IMR-90 (cell line): ENCODE measurements at regions of chr14 and their contacts with region 1.

Region 1: GRCh38 chr14:86057018-86057667 is 527.2 kb downstream of the FLRT2 start:
- DNase-seq: peak; percentile 39
- ATAC-seq: peak; percentile 51; the same call in 1 of the 2 replicates
- H3K4me3 ChIP-seq: no peak overlapping the region
- H3K27ac ChIP-seq: no peak overlapping the region
- H3K4me1 ChIP-seq: no peaks in the 10 kb centered on the region
- H3K27me3 ChIP-seq: no peaks in the 10 kb centered on the region
- CTCF ChIP-seq: peak; percentile 86
- POLR2A ChIP-seq: no peak
- RAD21 ChIP-seq: peak; percentile 86

Region 2: DNA sequence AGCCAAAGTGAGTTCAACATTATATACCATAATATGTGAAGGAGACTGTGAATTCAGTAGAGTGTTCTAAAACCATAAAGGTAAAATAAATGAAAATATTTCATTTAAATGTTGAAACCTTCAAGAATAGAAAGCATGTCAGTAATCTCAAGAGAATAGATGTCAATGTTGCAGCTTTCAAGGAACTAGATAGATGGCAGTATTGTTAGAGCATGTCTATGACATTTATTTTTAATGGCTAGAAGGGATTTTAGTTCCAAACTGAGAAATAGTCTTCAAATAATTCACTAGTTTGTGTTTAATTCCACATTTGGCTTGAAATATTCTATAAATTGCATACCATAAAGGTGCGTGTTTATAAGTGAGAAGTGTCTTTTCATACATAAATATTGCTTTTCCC is 200.7 kb before region 1 on chr14:
- CTCF ChIA-PET with region 1: no interaction called
- POLR2A ChIA-PET with region 1: no interaction called
- dilution Hi-C with region 1: no loop called
- in situ Hi-C with region 1: no loop called
- intact Hi-C with region 1: loop called (anchors 10 kb)
- DNase-seq: no peak
- ATAC-seq: no peak
- H3K4me3 ChIP-seq: no peak overlapping the region
- H3K27ac ChIP-seq: no peak overlapping the region
- H3K4me1 ChIP-seq: no peaks in the 10 kb centered on the region
- H3K27me3 ChIP-seq: no peaks in the 10 kb centered on the region
- CTCF ChIP-seq: peak; percentile 24; the same call in 1 of the 2 replicates
- POLR2A ChIP-seq: no peak
- RAD21 ChIP-seq: no peak

Region 3: GRCh38 chr14:86613126-86613525 is 556.0 kb after region 1 on chr14:
- CTCF ChIA-PET with region 1: no interaction called
- POLR2A ChIA-PET with region 1: interaction called, 17 read pairs
- dilution Hi-C with region 1: no loop called
- in situ Hi-C with region 1: no loop called
- intact Hi-C with region 1: no loop called
- DNase-seq: no peak
- ATAC-seq: no peak
- H3K4me3 ChIP-seq: no peak overlapping the region
- H3K27ac ChIP-seq: no peak overlapping the region
- H3K4me1 ChIP-seq: no peaks in the 10 kb centered on the region
- H3K27me3 ChIP-seq: no peaks in the 10 kb centered on the region
- CTCF ChIP-seq: no peak
- POLR2A ChIP-seq: no peak
- RAD21 ChIP-seq: no peak

Region 4: GRCh38 chr14:86902176-86902950 is 845.2 kb after region 1 on chr14:
- CTCF ChIA-PET with region 1: no interaction called
- POLR2A ChIA-PET with region 1: no interaction called
- dilution Hi-C with region 1: no loop called
- in situ Hi-C with region 1: no loop called
- intact Hi-C with region 1: loop called (anchors 2 kb)
- DNase-seq: no peak
- ATAC-seq: no peak
- H3K4me3 ChIP-seq: no peak overlapping the region
- H3K27ac ChIP-seq: no peak overlapping the region
- H3K4me1 ChIP-seq: no peaks in the 10 kb centered on the region; the same call in 1 of the 2 replicates
- H3K27me3 ChIP-seq: no peaks in the 10 kb centered on the region
- CTCF ChIP-seq: no peak
- POLR2A ChIP-seq: no peak
- RAD21 ChIP-seq: no peak

Region 5: DNA sequence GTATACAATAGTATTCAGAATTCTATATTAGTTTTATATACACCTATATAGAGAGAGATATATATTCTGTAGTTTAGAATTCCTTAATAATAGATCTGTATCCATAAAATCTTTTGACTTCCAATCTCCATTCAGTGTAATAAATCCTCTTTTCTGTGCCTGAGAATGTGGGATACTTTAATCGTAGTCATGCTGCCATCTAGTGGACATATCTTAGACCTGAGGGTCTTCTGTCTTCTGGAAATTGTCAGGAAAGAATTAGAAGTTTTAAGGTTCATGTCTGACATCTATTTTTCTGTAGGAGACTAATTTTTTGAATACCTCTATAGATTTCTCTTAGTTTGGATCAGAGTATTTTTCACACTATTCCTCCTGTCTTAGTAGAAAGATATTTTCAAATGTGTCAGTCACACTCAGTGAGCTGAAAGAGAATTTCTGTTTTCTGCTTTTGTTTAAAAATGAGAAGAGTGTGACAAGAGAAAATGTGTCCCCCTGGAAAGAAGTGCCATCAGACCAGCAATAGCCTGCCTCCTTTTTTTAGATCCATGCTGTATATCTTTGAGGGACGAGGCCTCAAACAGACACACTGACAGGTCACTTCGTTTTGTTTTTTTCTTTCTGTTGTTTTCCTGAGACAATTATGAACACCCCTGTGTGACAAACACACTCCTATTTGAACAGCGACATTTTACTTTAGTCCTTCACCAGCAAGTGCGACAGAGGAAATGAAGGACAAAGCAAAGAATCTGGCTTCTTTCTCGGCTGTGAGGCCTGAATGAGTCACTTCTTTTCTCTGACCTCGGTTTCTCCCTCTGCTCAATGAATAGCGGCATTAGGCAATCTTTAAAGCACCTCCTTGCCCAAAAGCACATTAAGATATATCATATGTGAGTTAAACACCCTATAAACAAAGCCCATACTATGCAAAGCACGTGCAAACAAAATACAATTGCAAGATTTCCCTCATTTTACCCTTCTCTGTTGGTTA is 1839.5 kb after region 1 on chr14:
- CTCF ChIA-PET with region 1: no interaction called
- POLR2A ChIA-PET with region 1: no interaction called
- dilution Hi-C with region 1: no loop called
- in situ Hi-C with region 1: no loop called
- intact Hi-C with region 1: loop called (anchors 10 kb)
- DNase-seq: peak; percentile 56
- ATAC-seq: peak; percentile 81
- H3K4me3 ChIP-seq: no peak overlapping the region
- H3K27ac ChIP-seq: no peak overlapping the region
- H3K4me1 ChIP-seq: no peaks in the 10 kb centered on the region
- H3K27me3 ChIP-seq: no peaks in the 10 kb centered on the region
- CTCF ChIP-seq: peak; percentile 69
- POLR2A ChIP-seq: no peak
- RAD21 ChIP-seq: peak; percentile 67